ENCODE measurements at regions of chr6 and their contacts with region 1.

Region 1: DNA sequence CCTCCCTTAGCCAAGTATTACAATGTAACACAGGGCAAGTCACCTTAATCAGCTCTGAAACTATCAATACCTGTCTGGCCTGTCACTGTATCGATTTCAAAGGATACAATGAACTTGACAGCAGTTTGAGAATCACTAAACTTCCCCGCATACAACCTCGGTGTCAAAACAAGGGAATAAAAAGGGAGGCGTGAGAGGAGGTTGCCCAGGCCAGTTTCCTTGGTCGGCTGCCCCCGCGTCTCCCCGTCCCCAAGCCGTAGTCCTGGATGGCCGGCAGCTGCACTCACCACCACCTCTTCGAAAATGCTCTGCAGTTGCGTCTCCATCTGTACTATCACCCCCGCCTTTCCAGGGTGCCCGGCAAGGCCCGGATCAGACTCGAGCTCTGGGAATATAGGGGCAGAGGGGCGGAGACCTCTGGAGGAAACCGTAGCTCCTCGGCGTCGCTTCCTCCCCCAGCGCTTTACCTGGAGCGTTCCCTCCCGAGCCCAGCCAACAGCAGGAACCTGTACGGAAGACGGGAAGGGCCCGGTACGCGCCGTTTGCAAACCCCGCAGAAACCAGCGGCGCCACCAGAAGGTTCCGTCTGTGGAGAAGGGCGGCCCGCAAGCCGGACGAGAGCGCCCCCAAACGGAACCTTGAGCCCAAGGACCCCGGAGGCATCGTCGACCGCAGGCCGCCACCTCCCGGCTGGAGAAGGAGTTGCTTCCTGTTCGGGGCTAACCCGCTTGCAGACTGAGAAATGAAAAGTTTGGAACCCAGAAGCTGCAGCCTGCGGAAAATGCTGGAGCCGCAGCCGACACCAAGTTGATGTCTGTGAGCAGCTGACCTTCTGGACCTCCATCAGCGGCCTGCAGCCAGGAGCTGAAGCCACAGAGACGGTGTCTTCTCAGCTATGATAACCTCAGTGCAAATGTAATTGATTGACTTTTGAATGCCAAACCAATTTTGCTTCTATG is at the start of gene MED23:
- DNase-seq: peak; percentile 97
- H3K4me3 Mint-ChIP-seq: peak within 1 kb of the TSS; percentile 99
- H3K27ac Mint-ChIP-seq: peak within 1 kb of the TSS; percentile 85
- H3K4me1 Mint-ChIP-seq: peaks cover 37% of the 10 kb centered on the region
- H3K27me3 Mint-ChIP-seq: no peaks in the 10 kb centered on the region
- total RNA-seq, gene MED23: 25.5 to 26.0 TPM

Region 2: DNA sequence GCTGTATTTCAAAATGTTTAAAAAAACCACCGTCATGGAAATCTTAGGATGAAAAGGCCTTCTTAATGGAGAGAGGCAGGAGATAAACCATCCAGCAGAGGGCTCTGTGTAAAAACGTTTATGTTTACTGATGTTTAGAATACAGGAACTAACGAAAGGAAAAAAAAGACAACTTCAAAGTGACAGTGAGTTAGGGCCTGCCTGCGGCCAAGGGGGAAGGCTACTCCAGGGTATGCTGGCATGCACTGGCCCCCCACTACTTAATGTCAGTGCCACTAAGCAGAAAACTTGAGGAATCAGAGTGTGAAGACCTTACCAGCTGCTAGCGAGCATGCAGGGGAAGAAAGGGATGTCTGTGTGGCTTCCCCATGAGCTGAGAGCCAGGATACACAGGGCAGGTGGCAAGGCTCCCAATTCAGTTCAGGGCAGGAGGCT is 445.0 kb before region 1 on chr6:
- CTCF ChIA-PET with region 1: interaction called, 11 read pairs
- POLR2A ChIA-PET with region 1: no interaction called
- intact Hi-C with region 1: no loop called
- DNase-seq: no peak
- H3K4me3 Mint-ChIP-seq: no peak overlapping the region
- H3K27ac Mint-ChIP-seq: no peak overlapping the region
- H3K4me1 Mint-ChIP-seq: peaks cover 9% of the 10 kb centered on the region
- H3K27me3 Mint-ChIP-seq: no peaks in the 10 kb centered on the region

Region 3: DNA sequence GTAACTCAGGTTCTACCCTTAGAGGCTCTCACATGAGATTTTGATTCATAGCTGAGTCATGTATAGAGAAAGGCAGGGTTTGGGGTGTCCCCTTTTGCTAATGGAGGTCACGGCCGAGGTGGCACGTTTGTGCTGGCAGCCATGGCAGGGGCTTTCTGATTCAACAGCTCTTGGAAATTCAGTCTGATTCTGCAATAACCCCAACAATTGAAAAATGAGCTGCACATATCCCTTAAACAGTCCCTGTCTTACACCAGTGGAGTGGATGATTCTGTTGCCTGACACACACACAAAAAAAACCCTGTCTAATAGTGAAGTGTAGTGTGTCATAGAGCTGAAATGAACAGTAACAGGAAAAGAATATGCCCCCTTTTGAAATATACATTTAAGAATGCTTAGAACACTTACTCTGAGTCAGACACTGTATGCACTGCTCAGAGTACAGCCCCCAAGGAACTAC is 95.4 kb before region 1 on chr6:
- CTCF ChIA-PET with region 1: interaction called, 17 read pairs
- POLR2A ChIA-PET with region 1: no interaction called
- intact Hi-C with region 1: loop called (anchors 1 kb)
- DNase-seq: peak; percentile 82
- H3K4me3 Mint-ChIP-seq: no peak overlapping the region
- H3K27ac Mint-ChIP-seq: peak overlapping the region; percentile 76
- H3K4me1 Mint-ChIP-seq: peaks cover 42% of the 10 kb centered on the region
- H3K27me3 Mint-ChIP-seq: no peaks in the 10 kb centered on the region

Region 4: DNA sequence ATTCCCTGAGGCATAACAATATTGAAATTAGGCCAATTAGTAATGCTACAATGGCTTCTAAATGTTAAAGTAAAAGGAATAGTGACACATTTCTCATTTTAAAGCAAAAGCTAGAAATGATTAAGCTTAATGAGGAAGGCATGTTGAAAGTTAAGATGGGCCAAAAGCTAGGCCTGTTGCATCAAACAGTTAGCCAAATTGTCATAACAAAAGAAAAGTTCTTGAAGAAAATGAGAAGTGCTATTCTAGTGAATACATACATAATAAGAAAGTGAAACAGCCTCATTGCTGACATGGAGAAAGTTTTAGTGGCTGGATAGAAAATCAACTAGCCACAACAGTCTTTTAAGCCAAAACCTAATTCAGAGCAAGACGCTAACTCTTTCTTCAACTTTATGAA is 60.3 kb after region 1 on chr6:
- CTCF ChIA-PET with region 1: interaction called, 8 read pairs
- POLR2A ChIA-PET with region 1: no interaction called
- intact Hi-C with region 1: loop called (anchors 1 kb)
- DNase-seq: no peak
- H3K4me3 Mint-ChIP-seq: no peak overlapping the region
- H3K27ac Mint-ChIP-seq: peak overlapping the region; percentile 34
- H3K4me1 Mint-ChIP-seq: peaks cover 18% of the 10 kb centered on the region
- H3K27me3 Mint-ChIP-seq: no peaks in the 10 kb centered on the region

Region 5: GRCh38 chr6:132490024-132490423 is 862.0 kb after region 1 on chr6:
- CTCF ChIA-PET with region 1: no interaction called
- POLR2A ChIA-PET with region 1: no interaction called
- intact Hi-C with region 1: loop called (anchors 10 kb)
- DNase-seq: no peak
- H3K4me3 Mint-ChIP-seq: no peak overlapping the region
- H3K27ac Mint-ChIP-seq: no peak overlapping the region
- H3K4me1 Mint-ChIP-seq: peaks cover 28% of the 10 kb centered on the region
- H3K27me3 Mint-ChIP-seq: no peaks in the 10 kb centered on the region

Measured in activated CD4-positive, alpha-beta memory T cell treated with anti-CD3 and anti-CD28 coated beads for 36 hours (primary cell).